Right lobe of liver (tissue), 6 donors: ENCODE measurements at regions of chr21 and their contacts with region 1.

Region 1: DNA sequence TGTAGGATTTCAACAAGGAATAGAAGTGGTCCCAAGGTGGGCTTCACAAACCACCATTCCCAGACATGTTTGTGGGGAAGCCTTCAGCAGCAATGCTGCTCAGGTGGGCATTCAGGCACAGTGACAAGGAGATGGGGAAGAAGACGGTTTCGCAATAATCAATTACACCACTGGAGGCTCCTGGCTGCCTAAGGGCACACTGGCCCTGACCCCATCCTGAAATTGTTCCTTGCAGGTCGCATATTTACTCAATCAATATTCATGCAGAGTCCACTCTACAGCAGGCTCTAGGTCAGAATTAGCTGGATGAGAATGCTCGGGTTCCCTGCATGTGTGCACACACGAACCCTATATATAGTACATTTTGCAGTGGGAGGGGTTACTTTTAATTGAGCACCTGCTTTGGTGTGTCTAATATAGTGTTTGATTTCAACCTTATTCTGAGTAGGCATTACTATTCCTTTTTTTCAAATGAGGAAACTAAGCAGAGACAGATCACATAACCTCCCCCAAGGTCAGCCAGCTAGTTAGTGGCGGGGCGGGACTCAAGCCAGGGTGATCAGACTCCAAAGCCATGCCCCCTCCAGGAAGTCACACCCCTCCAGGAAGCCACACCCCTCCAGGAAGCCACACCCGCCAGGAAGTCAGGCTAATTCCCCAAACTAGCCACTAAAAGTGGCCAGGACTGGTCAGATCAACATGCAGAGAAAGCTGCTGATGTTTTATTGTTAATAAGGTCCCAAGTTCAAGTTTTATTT is 106.5 kb downstream of the HLCS start:
- DNase-seq: peak; percentile 91 to 95 (median 95)
- ATAC-seq: peak; percentile 83 to 98 (median 90)
- H3K4me3 ChIP-seq: peak overlapping the region in 2 of 3 donors; percentile 13 to 38
- H3K27ac ChIP-seq: peak overlapping the region; percentile 61 to 81 (median 72)
- H3K4me1 ChIP-seq: peaks cover 0 to 46% (median 17%) of the 10 kb centered on the region in 4 donors
- H3K27me3 ChIP-seq: no peaks in the 10 kb centered on the region
- CTCF ChIP-seq: peak in 1 of 4 donors; percentile 11
- POLR2A ChIP-seq: peak; percentile 90

Region 2: DNA sequence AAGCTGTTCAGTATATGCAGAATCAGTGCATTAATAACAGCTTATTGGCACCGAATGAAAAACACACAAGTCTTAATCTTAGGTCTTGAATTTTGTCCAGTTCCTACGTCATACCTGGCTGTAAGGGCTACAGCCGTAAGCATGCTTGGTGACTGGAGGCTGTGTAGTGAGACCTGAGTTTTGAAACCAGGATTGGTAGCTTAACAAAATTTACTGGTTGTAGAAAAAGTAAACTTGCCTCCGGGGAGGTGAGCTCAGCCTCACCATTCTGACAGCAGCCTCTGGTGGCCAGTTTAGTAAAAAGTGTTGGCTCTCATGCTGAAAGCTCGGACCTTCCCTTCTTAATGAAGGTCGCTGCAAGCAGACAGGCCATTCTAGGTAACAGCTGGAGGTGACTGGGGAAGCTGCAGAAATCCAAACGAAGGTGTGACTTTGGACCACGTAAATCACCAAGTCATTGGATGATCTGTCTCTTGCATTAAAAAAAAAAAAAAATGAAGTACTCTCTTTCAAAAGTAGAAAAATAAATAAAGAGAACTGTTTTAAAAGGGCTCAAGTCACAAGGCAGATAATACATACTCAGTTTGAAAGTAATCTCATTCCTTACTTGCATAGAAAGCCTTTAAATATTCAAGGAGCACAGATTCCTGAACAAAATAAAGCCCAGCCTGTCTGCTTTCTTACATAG is 57.7 kb after region 1 on chr21:
- intact Hi-C with region 1: loop called in 1 of 2 experiments (anchors 10 kb)
- DNase-seq: peak in 2 of 3 donors; percentile 35 to 64
- ATAC-seq: peak; percentile 83 to 88 (median 86)
- H3K4me3 ChIP-seq: no peak overlapping the region
- H3K27ac ChIP-seq: peak overlapping the region; percentile 68 to 85 (median 83)
- H3K4me1 ChIP-seq: peaks cover 0 to 46% (median 9%) of the 10 kb centered on the region in 4 donors
- H3K27me3 ChIP-seq: no peaks in the 10 kb centered on the region
- CTCF ChIP-seq: peak; percentile 53 to 66 (median 58)
- POLR2A ChIP-seq: no peak

Region 3: GRCh38 chr21:36959020-36959835 is 99.3 kb after region 1 on chr21:
- intact Hi-C with region 1: no loop called
- DNase-seq: no peak
- ATAC-seq: peak in 1 of 4 donors; percentile 13
- H3K4me3 ChIP-seq: no peak overlapping the region
- H3K27ac ChIP-seq: no peak overlapping the region
- H3K4me1 ChIP-seq: no peaks in the 10 kb centered on the region
- H3K27me3 ChIP-seq: no peaks in the 10 kb centered on the region
- CTCF ChIP-seq: no peak
- POLR2A ChIP-seq: no peak

Region 4: DNA sequence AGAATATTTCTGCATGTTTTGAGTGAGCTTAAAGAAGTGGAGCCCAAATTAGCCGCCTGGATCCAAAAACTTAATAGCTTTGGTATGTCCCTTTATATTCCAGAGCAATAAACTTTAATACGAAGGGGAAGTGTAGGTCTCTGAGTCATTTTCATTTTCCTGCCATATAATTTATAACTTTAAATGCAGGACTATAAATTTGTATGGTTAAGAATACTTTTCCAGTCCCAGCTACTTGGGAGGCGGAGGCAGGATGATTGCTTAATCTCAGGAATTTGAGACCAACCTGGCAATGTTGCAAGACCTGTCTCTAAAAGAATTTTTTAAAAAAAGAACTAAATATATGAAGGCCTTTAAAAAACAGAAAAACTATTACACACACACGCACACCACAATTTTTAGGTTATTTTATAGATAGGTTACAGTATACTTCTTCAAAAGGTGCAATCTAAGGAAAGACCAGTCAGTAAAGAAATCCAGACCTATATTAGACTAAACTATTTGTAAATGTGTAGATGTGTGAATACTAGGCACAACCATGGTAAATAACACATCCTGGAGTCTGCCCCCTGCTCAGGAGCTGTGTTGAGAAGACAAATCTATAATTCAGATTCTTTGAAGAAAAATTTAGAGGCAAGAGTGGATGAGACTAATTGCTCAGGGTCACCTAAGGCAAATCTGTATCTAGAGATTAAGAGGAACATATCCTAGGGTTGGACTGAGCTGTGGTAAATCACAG is 293.4 kb after region 1 on chr21:
- intact Hi-C with region 1: no loop called
- DNase-seq: no peak
- ATAC-seq: peak in 1 of 4 donors; percentile 27
- H3K4me3 ChIP-seq: no peak overlapping the region
- H3K27ac ChIP-seq: peak overlapping the region in 1 of 3 donors; percentile 69
- H3K4me1 ChIP-seq: peaks cover 0 to 13% (median 3%) of the 10 kb centered on the region in 4 donors
- H3K27me3 ChIP-seq: no peaks in the 10 kb centered on the region
- CTCF ChIP-seq: no peak
- POLR2A ChIP-seq: no peak